ENCODE measurements at regions of chr14 and their contacts with region 1.

Region 1: DNA sequence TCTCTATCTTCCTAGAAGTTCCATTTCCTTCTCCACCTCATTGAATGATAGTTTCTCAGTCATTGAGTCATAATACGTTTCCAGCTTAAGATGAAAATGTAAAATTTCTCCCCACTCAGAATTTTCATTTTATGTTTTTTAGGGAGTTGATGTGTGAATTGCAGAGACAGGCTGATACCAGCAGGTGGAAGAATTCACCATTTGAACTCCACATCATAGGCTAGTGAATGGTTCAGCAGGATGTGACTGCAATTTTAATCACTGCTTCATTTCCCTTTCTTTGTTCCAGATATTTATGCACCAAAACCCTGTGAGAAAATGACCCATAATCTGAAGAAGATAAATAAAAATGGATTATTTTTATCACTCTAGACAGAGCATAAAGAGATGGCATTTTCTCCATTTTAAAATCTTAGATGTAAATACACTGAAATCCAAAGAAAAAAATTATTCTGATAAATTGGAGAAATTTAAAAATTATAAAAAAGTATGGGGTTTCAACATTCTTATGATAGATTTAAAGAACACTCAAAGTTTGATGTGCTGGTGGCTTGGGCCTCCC is 10.6 kb upstream of the PYGL start:
- DNase-seq: no peak
- H3K4me3 Mint-ChIP-seq: no peak overlapping the region
- H3K27ac Mint-ChIP-seq: no peak overlapping the region
- H3K4me1 Mint-ChIP-seq: peaks cover 6% of the 10 kb centered on the region
- H3K27me3 Mint-ChIP-seq: no peaks in the 10 kb centered on the region

Region 2: GRCh38 chr14:50875359-50876070 is 79.4 kb before region 1 on chr14:
- CTCF ChIA-PET with region 1: no interaction called
- intact Hi-C with region 1: loop called (anchors 5 kb)
- DNase-seq: peak; percentile 89
- H3K4me3 Mint-ChIP-seq: no peak overlapping the region
- H3K27ac Mint-ChIP-seq: no peak overlapping the region
- H3K4me1 Mint-ChIP-seq: peaks cover 26% of the 10 kb centered on the region
- H3K27me3 Mint-ChIP-seq: peaks cover 51% of the 10 kb centered on the region

Region 3: DNA sequence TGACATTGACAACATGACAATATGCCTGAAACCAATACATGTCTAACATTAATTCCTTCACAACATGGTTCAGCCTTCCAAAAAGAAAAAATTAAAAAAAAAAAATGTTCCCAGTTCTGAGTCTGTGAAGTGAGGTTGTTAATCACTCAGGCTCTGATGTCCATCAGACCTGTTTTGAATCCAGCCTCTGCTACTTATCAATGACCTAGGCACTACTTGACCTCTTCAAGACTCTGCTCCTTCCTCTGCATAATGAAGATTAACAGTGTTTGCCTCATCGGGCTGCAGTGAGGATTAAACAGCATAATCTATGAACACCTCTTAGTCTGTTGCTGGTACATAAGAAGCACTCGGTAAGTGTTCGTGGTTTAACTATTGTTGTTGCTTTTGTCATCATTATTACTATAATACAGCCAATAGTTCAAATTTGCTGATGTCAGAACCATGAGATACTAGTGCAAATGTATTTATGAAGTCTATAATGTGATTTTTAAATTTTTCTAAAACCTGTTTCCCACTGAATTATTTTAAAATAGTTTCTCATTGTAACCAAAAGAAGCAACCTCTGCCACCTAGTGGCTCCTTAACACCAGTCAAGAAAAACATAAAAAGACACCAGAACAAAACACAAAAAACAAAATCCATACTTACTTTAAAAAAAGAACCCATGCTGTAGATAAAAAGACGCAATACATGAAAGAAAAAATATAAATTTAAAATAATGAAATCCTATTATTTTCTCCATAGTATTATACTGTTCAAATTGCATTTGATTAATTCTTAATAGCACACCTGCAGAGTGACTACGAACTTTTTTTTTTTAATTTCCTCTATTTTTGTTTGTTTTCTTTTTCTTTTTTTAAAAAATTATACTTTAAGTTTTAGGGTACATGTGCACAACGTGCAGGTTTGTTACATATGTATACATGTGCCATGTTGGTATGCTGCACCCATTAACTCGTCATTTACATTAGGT is 264.9 kb after region 1 on chr14:
- CTCF ChIA-PET with region 1: interaction called, 5 read pairs
- intact Hi-C with region 1: loop called (anchors 2 kb)
- DNase-seq: no peak
- H3K4me3 Mint-ChIP-seq: no peak overlapping the region
- H3K27ac Mint-ChIP-seq: no peak overlapping the region
- H3K4me1 Mint-ChIP-seq: no peaks in the 10 kb centered on the region
- H3K27me3 Mint-ChIP-seq: peaks cover 5% of the 10 kb centered on the region